B cell (primary cell): ENCODE measurements at regions of chr11 and their contacts with region 1.

Region 1: GRCh38 chr11:65477149-65477965 is 21.5 kb upstream of the MALAT1 start:
- DNase-seq: peak; percentile 90
- ATAC-seq: peak; percentile 87
- H3K4me3 ChIP-seq: peak overlapping the region; percentile 61 to 93 (median 83)
- H3K4me3 Mint-ChIP-seq: peak overlapping the region; percentile 96
- H3K27ac ChIP-seq: peak overlapping the region; percentile 88 to 92
- H3K27ac Mint-ChIP-seq: peak overlapping the region; percentile 99
- H3K4me1 ChIP-seq: peaks cover 11 to 32% of the 10 kb centered on the region in 2 donors
- H3K4me1 Mint-ChIP-seq: peaks cover 14% of the 10 kb centered on the region
- H3K27me3 ChIP-seq: no peaks in the 10 kb centered on the region
- H3K27me3 Mint-ChIP-seq: no peaks in the 10 kb centered on the region
- CTCF ChIP-seq: no peak

Region 2: DNA sequence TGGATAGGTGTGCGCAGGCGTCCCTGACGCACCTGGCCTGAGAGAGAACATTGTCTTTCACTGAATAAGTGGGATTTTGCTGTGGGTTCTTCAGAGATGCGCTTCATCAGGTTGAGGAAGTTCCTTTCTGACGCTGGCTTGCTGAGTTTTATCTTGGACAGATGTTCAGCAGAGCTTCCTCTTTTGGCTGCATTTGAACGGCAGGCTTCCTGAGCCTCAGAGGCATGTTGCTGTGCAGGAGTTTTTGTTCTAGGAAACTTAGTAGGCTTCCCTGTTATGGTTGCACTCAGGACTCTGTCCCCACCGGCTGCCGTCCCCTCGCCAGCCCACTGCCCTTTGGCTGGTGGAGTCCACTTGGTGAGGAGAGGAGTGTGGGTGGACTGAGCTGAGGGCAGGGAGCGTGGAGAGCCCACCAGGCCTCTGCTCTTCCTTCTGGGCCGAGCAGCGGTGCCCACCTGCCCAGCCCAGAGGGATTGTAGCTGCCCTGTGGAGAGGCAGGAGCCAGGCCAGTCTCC is 73.7 kb before region 1 on chr11:
- CTCF ChIA-PET with region 1: no interaction called
- POLR2A ChIA-PET with region 1: interaction called, 13 read pairs
- intact Hi-C with region 1: no loop called
- DNase-seq: peak; percentile 91
- ATAC-seq: peak; percentile 68
- H3K4me3 ChIP-seq: peak overlapping the region in 2 of 5 experiments; percentile 10 to 22
- H3K4me3 Mint-ChIP-seq: peak overlapping the region; percentile 71
- H3K27ac ChIP-seq: peak overlapping the region; percentile 81 to 86
- H3K27ac Mint-ChIP-seq: peak overlapping the region; percentile 96
- H3K4me1 ChIP-seq: peaks cover 34 to 57% of the 10 kb centered on the region in 2 donors
- H3K4me1 Mint-ChIP-seq: peaks cover 40% of the 10 kb centered on the region
- H3K27me3 ChIP-seq: no peaks in the 10 kb centered on the region
- H3K27me3 Mint-ChIP-seq: no peaks in the 10 kb centered on the region
- CTCF ChIP-seq: no peak

Region 3: DNA sequence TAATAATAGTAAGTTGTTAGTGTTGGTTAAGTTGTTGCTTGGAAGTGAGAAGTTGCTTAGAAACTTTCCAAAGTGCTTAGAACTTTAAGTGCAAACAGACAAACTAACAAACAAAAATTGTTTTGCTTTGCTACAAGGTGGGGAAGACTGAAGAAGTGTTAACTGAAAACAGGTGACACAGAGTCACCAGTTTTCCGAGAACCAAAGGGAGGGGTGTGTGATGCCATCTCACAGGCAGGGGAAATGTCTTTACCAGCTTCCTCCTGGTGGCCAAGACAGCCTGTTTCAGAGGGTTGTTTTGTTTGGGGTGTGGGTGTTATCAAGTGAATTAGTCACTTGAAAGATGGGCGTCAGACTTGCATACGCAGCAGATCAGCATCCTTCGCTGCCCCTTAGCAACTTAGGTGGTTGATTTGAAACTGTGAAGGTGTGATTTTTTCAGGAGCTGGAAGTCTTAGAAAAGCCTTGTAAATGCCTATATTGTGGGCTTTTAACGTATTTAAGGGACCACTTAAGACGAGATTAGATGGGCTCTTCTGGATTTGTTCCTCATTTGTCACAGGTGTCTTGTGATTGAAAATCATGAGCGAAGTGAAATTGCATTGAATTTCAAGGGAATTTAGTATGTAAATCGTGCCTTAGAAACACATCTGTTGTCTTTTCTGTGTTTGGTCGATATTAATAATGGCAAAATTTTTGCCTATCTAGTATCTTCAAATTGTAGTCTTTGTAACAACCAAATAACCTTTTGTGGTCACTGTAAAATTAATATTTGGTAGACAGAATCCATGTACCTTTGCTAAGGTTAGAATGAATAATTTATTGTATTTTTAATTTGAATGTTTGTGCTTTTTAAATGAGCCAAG is 52.0 kb before region 1 on chr11:
- CTCF ChIA-PET with region 1: interaction called, 5 read pairs
- POLR2A ChIA-PET with region 1: interaction called, 81 read pairs
- intact Hi-C with region 1: loop called (anchors 2 kb)
- DNase-seq: peak; percentile 94
- ATAC-seq: peak; percentile 36
- H3K4me3 ChIP-seq: peak overlapping the region; percentile 63 to 98 (median 75)
- H3K4me3 Mint-ChIP-seq: peak overlapping the region; percentile 92
- H3K27ac ChIP-seq: peak overlapping the region; percentile 91 to 97
- H3K27ac Mint-ChIP-seq: peak overlapping the region; percentile 100
- H3K4me1 ChIP-seq: peaks cover 79 to 88% of the 10 kb centered on the region in 2 donors
- H3K4me1 Mint-ChIP-seq: peaks cover 75% of the 10 kb centered on the region
- H3K27me3 ChIP-seq: no peaks in the 10 kb centered on the region
- H3K27me3 Mint-ChIP-seq: no peaks in the 10 kb centered on the region
- CTCF ChIP-seq: peak; percentile 37

Region 4: DNA sequence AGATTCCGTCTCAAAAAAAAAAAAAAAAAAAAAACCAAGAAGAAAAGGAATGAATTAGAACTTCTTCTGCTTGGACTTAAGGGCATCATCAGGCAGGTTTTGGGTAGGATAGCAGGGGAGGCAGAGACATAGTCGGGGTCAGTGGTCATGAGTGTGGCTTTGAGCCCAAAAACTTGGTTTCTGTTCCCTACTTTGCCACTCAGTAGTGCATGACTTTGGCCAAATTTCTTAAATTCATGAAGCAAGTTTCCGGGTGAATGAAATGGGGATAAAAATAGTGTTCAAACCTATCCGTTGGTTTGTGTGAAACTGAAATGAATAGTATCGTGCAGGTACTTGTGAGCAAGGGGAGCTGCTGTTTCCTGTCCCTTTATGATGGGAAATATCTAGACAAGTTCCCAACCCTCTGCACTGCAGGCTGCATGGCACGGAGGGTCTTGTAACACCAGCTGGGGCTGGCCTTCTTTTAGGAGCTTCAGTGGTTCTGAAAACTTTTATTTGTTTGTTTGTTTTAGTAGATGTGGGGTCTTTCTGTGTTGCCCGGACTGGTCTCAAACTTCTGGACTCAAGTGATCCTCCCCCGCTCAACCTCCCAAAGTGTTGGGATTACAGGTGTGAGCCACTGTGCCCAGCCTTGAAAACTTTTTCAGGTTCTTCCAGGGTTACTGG is 36.4 kb before region 1 on chr11:
- CTCF ChIA-PET with region 1: interaction called, 10 read pairs
- POLR2A ChIA-PET with region 1: interaction called, 6 read pairs
- intact Hi-C with region 1: loop called (anchors 1 kb)
- DNase-seq: peak; percentile 81
- ATAC-seq: peak; percentile 40
- H3K4me3 ChIP-seq: peak overlapping the region in 3 of 5 experiments; percentile 24 to 48 (median 29)
- H3K4me3 Mint-ChIP-seq: peak overlapping the region; percentile 89
- H3K27ac ChIP-seq: peak overlapping the region; percentile 59 to 79
- H3K27ac Mint-ChIP-seq: peak overlapping the region; percentile 98
- H3K4me1 ChIP-seq: peaks cover 63 to 69% of the 10 kb centered on the region in 2 donors
- H3K4me1 Mint-ChIP-seq: peaks cover 62% of the 10 kb centered on the region
- H3K27me3 ChIP-seq: no peaks in the 10 kb centered on the region
- H3K27me3 Mint-ChIP-seq: no peaks in the 10 kb centered on the region
- CTCF ChIP-seq: no peak

Region 5: GRCh38 chr11:65454696-65455456 is 22.5 kb before region 1 on chr11:
- CTCF ChIA-PET with region 1: interaction called, 3 read pairs
- POLR2A ChIA-PET with region 1: interaction called, 5 read pairs
- intact Hi-C with region 1: loop called (anchors 1 kb)
- DNase-seq: peak; percentile 91
- ATAC-seq: peak; percentile 97
- H3K4me3 ChIP-seq: peak overlapping the region; percentile 63 to 80 (median 67)
- H3K4me3 Mint-ChIP-seq: peak overlapping the region; percentile 96
- H3K27ac ChIP-seq: peak overlapping the region; percentile 70
- H3K27ac Mint-ChIP-seq: peak overlapping the region; percentile 92
- H3K4me1 ChIP-seq: peaks cover 4 to 18% of the 10 kb centered on the region in 2 donors
- H3K4me1 Mint-ChIP-seq: peaks cover 32% of the 10 kb centered on the region
- H3K27me3 ChIP-seq: no peaks in the 10 kb centered on the region
- H3K27me3 Mint-ChIP-seq: no peaks in the 10 kb centered on the region
- CTCF ChIP-seq: no peak

Region 6: DNA sequence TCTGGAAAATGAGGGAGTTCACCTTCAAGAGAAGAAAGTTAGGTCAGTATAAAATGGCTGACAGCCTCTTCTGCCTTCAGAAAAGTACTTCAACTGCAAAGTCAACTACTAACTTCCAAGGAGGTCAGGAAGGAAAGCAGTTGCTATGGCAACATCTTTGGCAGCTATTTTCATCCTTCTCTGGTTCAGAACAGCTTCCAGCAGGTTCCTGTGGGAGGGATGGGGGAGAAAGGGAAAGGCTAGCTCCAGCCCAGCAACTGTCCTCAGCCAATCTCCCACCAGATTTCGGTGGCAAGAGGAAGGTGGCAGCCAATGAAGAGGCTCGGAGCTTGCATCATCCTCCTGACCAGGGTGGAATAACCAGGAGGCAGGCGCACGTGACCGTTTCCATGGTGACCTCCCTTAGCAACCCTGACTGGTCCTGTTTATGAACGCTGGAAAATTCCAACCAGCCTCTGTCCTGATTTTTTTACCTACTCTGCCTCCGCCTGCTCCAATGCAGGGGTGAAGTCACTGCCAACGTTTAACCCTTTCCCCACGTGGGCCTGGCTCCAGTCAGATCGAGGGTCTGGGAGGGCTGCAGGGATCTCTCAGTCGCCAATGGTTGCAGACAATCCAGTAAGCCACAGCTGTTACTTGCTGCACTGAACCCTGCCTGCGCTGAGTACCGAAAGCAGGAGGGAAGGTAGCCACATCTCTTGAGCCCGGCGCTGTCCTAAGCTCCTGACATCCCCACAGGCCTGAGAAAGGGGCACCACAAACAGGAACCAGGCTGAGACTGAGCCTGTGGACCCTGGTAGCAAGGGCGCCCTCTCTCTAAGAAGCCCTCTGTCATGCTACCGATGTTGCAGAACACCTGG is 10.3 kb after region 1 on chr11:
- CTCF ChIA-PET with region 1: interaction called, 19 read pairs
- POLR2A ChIA-PET with region 1: interaction called, 62 read pairs
- intact Hi-C with region 1: no loop called
- DNase-seq: peak; percentile 66
- ATAC-seq: peak; percentile 49
- H3K4me3 ChIP-seq: no peak overlapping the region
- H3K4me3 Mint-ChIP-seq: peak overlapping the region; percentile 72
- H3K27ac ChIP-seq: no peak overlapping the region
- H3K27ac Mint-ChIP-seq: peak overlapping the region; percentile 72
- H3K4me1 ChIP-seq: peaks cover 34 to 43% of the 10 kb centered on the region in 2 donors
- H3K4me1 Mint-ChIP-seq: peaks cover 45% of the 10 kb centered on the region
- H3K27me3 ChIP-seq: no peaks in the 10 kb centered on the region
- H3K27me3 Mint-ChIP-seq: no peaks in the 10 kb centered on the region
- CTCF ChIP-seq: no peak